Caco-2 (cell line): ENCODE measurements at regions of chr13 and their contacts with region 1.

Region 1: GRCh38 chr13:35720690-35721554 is 244.4 kb upstream of the MAB21L1 start:
- DNase-seq: peak; percentile 61 to 77
- H3K4me3 ChIP-seq: no peak overlapping the region
- H3K4me3 Mint-ChIP-seq: no peak overlapping the region
- H3K27ac Mint-ChIP-seq: no peak overlapping the region
- H3K4me1 ChIP-seq: no peaks in the 10 kb centered on the region
- H3K4me1 Mint-ChIP-seq: peaks cover 2% of the 10 kb centered on the region
- H3K27me3 ChIP-seq: no peaks in the 10 kb centered on the region
- H3K27me3 Mint-ChIP-seq: peaks cover 14% of the 10 kb centered on the region
- CTCF ChIP-seq: peak; percentile 95 to 98

Region 2: GRCh38 chr13:35210261-35210660 is 510.7 kb before region 1 on chr13:
- CTCF ChIA-PET with region 1: no interaction called
- POLR2A ChIA-PET with region 1: no interaction called
- intact Hi-C with region 1: loop called (anchors 10 kb)
- DNase-seq: no peak
- H3K4me3 ChIP-seq: no peak overlapping the region
- H3K4me3 Mint-ChIP-seq: no peak overlapping the region
- H3K27ac Mint-ChIP-seq: no peak overlapping the region
- H3K4me1 ChIP-seq: no peaks in the 10 kb centered on the region
- H3K4me1 Mint-ChIP-seq: no peaks in the 10 kb centered on the region
- H3K27me3 ChIP-seq: no peaks in the 10 kb centered on the region
- H3K27me3 Mint-ChIP-seq: peaks cover 3% of the 10 kb centered on the region
- CTCF ChIP-seq: no peak

Region 3: DNA sequence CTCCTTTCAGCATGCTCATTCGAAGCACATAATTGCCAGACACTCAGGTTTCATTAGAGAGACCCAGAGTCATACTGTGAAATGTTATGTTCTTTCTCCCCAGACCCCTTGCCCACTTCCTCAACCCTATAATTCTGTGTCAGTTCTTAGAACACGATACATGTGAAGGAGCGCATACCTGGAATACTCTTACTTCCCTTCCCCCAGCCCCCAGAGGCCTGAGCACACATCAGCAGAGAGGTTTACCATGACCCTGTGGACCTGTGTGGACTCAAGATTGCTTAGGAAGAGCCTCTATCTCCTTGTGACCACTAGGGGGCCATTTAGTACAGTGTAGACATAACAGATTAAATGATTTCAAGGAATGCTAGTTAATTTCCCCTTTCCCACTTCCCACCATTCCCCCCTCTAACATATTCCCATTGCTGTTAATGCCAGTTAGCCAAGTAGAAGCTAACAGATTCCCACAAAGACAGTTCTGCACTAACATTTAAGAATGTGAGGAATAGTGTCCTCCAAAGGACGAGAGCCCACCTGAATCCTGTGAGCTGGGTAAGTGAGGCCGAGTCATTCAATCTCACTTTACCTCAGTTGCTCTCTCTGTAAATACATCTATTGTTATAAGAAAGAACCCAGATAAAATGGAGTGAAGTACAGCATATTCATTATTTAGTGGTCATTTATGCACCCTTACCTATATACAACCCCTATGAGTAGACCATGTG is 90.2 kb before region 1 on chr13:
- CTCF ChIA-PET with region 1: interaction called, 3 read pairs
- POLR2A ChIA-PET with region 1: no interaction called
- intact Hi-C with region 1: loop called (anchors 1 kb)
- DNase-seq: peak; percentile 72 to 76
- H3K4me3 ChIP-seq: no peak overlapping the region
- H3K4me3 Mint-ChIP-seq: no peak overlapping the region
- H3K27ac Mint-ChIP-seq: no peak overlapping the region
- H3K4me1 ChIP-seq: peaks cover 4% of the 10 kb centered on the region; the same call in 1 of the 2 replicates
- H3K4me1 Mint-ChIP-seq: peaks cover 6% of the 10 kb centered on the region
- H3K27me3 ChIP-seq: no peaks in the 10 kb centered on the region
- H3K27me3 Mint-ChIP-seq: peaks cover 3% of the 10 kb centered on the region
- CTCF ChIP-seq: peak; percentile 76 to 80

Region 4: DNA sequence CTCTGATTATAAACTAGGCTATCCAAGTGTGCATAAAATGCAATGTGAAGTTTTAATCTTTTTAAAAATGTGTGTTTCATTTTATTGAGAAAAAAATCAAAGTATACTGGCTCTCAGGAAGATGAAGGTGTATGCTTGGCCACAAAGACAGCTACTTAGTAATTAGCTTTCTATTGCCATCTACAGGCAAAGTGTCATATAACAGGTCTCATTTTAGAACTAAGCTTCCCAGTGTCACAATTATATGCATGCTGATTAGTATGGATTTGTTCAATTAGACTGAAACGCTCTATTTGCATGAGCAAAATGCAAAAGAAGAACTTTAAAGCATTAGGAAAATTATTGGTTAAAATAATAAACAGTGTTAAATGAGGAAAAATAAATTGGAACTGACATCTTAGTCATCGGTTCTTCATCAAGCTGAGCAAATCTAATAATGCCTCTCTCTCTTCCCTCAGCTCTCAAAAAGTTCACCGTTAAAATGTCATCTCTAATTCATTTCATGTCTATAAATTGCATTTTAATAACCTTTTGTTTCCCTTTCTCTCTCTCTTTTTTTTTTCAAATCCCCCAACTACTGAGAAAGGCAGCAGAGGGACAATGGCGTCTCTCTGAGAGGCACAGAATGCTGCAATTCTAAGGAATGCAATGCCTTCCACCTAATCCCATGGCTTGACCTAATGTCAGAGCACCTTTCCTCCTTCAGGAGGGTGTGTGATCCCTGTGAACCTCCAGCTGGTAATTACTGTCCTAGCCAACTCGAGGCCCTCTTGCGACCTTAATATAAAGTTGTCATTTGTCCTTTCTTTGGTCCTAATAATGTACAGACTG is 68.6 kb after region 1 on chr13:
- CTCF ChIA-PET with region 1: interaction called, 3 read pairs
- POLR2A ChIA-PET with region 1: no interaction called
- intact Hi-C with region 1: loop called (anchors 1 kb)
- DNase-seq: peak in 1 of 2 experiments; percentile 9
- H3K4me3 ChIP-seq: no peak overlapping the region
- H3K4me3 Mint-ChIP-seq: no peak overlapping the region
- H3K27ac Mint-ChIP-seq: no peak overlapping the region
- H3K4me1 ChIP-seq: no peaks in the 10 kb centered on the region
- H3K4me1 Mint-ChIP-seq: no peaks in the 10 kb centered on the region
- H3K27me3 ChIP-seq: no peaks in the 10 kb centered on the region
- H3K27me3 Mint-ChIP-seq: peaks cover 12% of the 10 kb centered on the region
- CTCF ChIP-seq: peak; percentile 31 to 53